Posterior cingulate gyrus (tissue), 11 donors: ENCODE measurements at regions of chr3 and their contacts with region 1.

Region 1: GRCh38 chr3:197949754-197950660 is at the start of gene RPL35A:
- DNase-seq: peak; percentile 74 to 97 (median 80)

Region 2: DNA sequence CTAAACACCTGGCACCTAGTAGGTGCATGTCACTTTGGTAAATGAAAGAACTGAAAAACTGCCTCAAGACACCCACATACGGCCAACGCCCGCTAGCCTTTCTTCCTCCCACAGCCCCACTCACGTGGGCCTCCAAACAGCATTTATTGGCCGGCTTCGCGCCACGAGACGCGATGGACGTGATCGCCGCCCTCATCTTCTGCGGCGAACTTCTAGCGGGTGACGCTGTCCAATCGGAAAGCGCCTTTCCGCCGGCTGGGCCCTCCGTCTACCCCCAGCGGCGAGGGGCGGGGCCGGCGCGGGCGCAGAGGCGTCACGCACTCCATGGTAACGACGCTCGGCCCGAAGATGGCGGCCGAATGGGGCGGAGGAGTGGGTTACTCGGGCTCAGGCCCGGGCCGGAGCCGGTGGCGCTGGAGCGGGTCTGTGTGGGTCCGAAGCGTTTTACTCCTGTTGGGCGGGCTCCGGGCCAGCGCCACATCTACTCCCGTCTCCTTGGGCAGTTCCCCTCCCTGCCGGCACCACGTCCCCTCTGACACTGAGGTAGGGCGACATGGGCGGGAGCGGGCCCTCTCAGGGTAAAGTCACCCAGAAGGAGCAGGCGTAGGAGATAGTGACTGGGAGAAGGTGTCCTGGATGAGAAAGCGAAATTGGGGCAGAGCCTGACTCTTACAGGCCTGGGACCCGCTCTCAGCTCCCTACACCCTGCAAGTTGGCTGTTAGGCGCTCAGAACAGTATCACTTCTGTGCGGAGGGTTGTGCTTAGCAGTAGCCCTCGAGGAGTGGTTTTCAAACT is 10.1 kb after region 1 on chr3 and contains the start of gene LMLN:
- intact Hi-C with region 1: loop called (anchors 1 kb)
- DNase-seq: peak; percentile 93 to 100 (median 96)

Region 3: GRCh38 chr3:197989651-197990050 is 39.6 kb after region 1 on chr3:
- intact Hi-C with region 1: no loop called
- DNase-seq: peak in 1 of 10 donors; percentile 18